Left cardiac atrium (tissue), 4 donors: ENCODE measurements at regions of chr17 and their contacts with region 1.

Region 1: DNA sequence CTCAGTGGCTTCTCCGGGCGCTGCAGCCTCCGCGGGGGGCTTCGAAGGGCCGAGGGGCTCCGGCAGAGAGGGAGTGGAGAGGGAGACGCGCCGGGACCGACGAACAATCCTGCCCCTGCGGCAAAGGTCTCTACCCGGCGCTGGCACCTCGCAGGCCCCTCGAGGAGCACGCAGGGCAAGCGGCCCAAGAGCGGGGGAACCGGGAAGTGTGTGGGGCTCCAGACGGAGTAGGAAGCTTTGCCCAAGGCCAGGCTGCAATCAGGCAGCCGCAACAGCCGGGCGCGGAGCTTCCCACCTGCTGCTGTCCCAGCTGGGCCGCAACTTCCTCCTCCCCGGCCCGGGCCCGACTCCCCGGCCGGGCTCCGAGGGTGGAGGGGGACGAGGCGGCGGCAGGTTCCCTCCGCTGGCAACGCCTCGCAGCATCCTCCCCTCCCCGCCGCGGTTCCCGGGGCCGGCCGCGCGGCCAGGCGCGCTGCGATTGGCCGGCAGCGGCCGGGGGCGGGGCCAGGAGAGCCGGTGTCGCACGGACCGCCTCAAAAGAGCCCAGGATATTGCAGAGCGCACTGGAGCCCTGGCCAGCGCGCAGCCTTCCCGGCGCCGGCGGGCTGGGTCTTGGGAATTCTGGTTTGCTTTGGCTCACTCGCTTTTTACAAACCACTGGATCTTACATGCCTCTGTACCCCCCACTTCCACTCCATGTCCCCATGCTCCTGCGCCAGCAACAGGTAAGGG is at the start of gene KCNJ2:
- DNase-seq: peak; percentile 90
- ATAC-seq: peak; percentile 95 to 99
- total RNA-seq, gene KCNJ2: 4.8 to 5.7 TPM

Region 2: GRCh38 chr17:70288540-70289290 is 119.6 kb after region 1 on chr17:
- intact Hi-C with region 1: no loop called
- DNase-seq: no peak
- ATAC-seq: no peak

Region 3: GRCh38 chr17:70313057-70313852 is 144.1 kb after region 1 on chr17:
- intact Hi-C with region 1: loop called in 1 of 2 experiments (anchors 5 kb)
- DNase-seq: no peak
- ATAC-seq: no peak